ENCODE measurements at regions of chr3 and their contacts with region 1.

Region 1: DNA sequence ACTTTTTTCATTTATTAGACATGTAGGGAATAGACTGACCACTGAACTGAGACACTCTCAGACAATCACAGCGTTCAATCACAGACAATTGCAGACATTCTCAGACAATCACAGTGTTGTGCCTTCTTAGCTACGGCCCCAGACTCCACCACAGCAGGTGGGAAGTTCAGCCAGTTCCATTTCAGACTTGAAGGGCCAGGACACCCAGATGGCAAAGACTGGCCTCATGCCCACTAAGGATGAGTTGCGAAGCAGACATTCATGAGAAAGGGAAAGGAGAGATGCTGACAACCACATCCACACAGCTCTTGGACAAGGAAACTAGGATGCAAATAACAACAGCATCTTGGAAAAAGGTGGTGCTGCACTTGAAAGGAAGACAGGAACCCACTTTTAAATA is 21.9 kb upstream of the ALDH1L1 start:
- DNase-seq: no peak
- ATAC-seq: no peak
- H3K4me3 ChIP-seq: no peak overlapping the region
- H3K27ac ChIP-seq: no peak overlapping the region
- H3K4me1 ChIP-seq: peaks cover 3% of the 10 kb centered on the region
- H3K27me3 ChIP-seq: no peaks in the 10 kb centered on the region
- CTCF ChIP-seq: no peak
- POLR2A ChIP-seq: no peak

Region 2: GRCh38 chr3:126134219-126134975 is 67.9 kb before region 1 on chr3:
- intact Hi-C with region 1: loop called (anchors 5 kb)
- DNase-seq: peak; percentile 69 to 73 (median 71)
- ATAC-seq: peak; percentile 72
- H3K4me3 ChIP-seq: no peak overlapping the region
- H3K27ac ChIP-seq: no peak overlapping the region
- H3K4me1 ChIP-seq: peaks cover 11% of the 10 kb centered on the region
- H3K27me3 ChIP-seq: no peaks in the 10 kb centered on the region
- CTCF ChIP-seq: peak; percentile 53 to 85 (median 78)
- POLR2A ChIP-seq: no peak